Caco-2 (cell line): ENCODE measurements at regions of chr15 and their contacts with region 1.

Region 1: DNA sequence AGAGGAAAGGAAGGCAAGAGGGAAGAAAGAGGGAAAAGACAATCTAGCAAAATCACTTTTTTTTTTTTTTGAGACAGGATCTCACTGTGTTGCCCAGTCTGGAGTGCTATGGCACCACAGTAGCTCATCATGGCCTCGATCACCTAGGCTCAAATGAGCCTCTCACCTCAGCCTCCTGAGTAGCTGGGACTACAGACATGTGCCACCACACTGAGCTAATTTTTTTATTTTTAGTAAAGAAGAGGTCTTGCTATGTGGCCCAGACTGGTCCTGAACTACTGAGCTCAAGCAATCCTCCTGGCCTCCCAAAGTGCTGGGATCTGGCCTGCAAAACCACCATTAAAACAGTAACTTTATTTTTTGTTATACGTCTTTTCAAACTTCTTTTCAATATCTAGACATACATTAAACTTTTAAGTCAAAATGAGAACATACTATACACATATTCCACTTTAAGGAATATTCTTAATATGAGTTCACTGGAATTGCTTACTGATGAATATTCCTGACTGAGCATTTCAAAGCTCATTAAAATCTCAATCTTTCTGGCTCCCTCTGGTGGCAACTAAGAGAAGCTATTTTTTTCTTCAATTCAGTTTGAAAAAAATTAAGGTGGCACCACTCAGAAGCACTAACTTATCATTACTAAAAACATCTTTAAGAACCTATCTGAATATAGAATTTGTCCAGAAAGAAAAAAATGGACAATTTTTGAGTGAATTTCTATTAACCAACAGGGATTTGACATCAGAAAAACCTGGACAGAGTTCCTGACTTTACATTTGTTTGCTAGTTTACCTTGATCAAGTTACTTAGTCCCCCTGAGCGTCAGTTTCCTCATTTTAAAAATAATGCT is 40.9 kb downstream of the UACA start:
- DNase-seq: peak in 1 of 2 experiments; percentile 27
- H3K4me3 ChIP-seq: no peak overlapping the region
- H3K4me3 Mint-ChIP-seq: no peak overlapping the region
- H3K27ac Mint-ChIP-seq: no peak overlapping the region
- H3K4me1 ChIP-seq: peaks cover 38% of the 10 kb centered on the region
- H3K4me1 Mint-ChIP-seq: peaks cover 36% of the 10 kb centered on the region
- H3K27me3 ChIP-seq: no peaks in the 10 kb centered on the region
- H3K27me3 Mint-ChIP-seq: no peaks in the 10 kb centered on the region
- CTCF ChIP-seq: peak; percentile 59 to 62

Region 2: DNA sequence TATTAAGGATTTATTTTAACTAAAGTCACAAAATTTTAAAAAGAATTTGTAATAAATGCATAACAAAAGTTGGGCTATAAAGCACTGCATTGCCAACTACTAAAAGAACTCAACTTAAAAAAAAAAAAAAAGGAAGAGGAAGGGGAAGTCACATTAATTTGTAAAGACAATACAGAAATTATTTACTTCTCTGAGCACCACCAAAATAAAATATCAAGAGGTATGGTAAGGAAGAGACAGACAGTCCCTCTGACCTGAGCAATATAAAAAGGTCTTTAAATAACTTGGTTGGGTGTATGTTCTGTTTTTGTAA is 42.6 kb before region 1 on chr15:
- CTCF ChIA-PET with region 1: interaction called, 23 read pairs
- POLR2A ChIA-PET with region 1: interaction called, 3 read pairs
- intact Hi-C with region 1: loop called (anchors 1 kb)
- DNase-seq: no peak
- H3K4me3 ChIP-seq: no peak overlapping the region
- H3K4me3 Mint-ChIP-seq: no peak overlapping the region
- H3K27ac Mint-ChIP-seq: no peak overlapping the region
- H3K4me1 ChIP-seq: no peaks in the 10 kb centered on the region
- H3K4me1 Mint-ChIP-seq: peaks cover 24% of the 10 kb centered on the region
- H3K27me3 ChIP-seq: no peaks in the 10 kb centered on the region
- H3K27me3 Mint-ChIP-seq: no peaks in the 10 kb centered on the region
- CTCF ChIP-seq: peak in 1 of 2 experiments; percentile 6

Region 3: DNA sequence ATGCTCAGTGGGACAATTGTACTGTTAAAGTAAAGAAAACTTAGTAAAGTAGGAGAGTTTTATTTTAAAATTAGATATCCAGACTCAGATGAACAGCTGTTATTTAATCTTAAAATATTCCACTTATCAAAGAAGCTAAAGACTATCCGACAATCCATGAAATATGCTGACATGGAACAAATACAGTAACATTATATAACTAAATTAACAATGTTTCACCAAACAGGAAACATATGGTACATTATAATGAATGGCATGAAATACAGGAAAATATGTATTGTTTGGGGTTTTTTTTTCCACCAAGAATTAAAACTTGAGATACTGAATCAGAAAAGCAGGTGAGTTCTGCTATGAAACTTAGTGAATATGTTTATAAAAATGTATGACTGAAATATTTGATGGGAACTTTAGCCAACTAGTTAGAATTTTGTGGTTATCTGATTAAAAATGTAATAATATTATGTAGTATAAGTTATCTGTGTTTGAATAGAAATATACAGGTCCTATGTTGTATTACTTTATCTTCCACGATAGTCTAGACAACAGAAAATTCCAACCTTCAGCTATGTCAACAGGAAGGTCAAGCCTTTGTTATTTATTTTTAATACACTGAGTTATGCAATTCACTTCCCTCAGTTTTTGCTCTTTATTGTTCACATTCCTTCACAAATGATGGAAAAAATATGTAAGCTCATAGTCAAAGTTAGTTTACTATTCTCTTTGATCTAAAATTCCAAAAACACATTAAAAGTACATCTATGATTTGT is 31.8 kb before region 1 on chr15:
- CTCF ChIA-PET with region 1: interaction called, 8 read pairs
- POLR2A ChIA-PET with region 1: no interaction called
- intact Hi-C with region 1: loop called (anchors 1 kb)
- DNase-seq: no peak
- H3K4me3 ChIP-seq: no peak overlapping the region
- H3K4me3 Mint-ChIP-seq: no peak overlapping the region
- H3K27ac Mint-ChIP-seq: no peak overlapping the region
- H3K4me1 ChIP-seq: peaks cover 30% of the 10 kb centered on the region
- H3K4me1 Mint-ChIP-seq: peaks cover 12% of the 10 kb centered on the region
- H3K27me3 ChIP-seq: no peaks in the 10 kb centered on the region
- H3K27me3 Mint-ChIP-seq: no peaks in the 10 kb centered on the region
- CTCF ChIP-seq: no peak

Region 4: GRCh38 chr15:70701891-70702568 is 20.5 kb before region 1 on chr15:
- CTCF ChIA-PET with region 1: interaction called, 8 read pairs
- POLR2A ChIA-PET with region 1: interaction called, 3 read pairs
- intact Hi-C with region 1: loop called (anchors 1 kb)
- DNase-seq: no peak
- H3K4me3 ChIP-seq: no peak overlapping the region
- H3K4me3 Mint-ChIP-seq: peak overlapping the region; percentile 62
- H3K27ac Mint-ChIP-seq: peak overlapping the region; percentile 64
- H3K4me1 ChIP-seq: peaks cover 82% of the 10 kb centered on the region
- H3K4me1 Mint-ChIP-seq: peaks cover 66% of the 10 kb centered on the region
- H3K27me3 ChIP-seq: no peaks in the 10 kb centered on the region
- H3K27me3 Mint-ChIP-seq: no peaks in the 10 kb centered on the region
- CTCF ChIP-seq: no peak

Region 5: DNA sequence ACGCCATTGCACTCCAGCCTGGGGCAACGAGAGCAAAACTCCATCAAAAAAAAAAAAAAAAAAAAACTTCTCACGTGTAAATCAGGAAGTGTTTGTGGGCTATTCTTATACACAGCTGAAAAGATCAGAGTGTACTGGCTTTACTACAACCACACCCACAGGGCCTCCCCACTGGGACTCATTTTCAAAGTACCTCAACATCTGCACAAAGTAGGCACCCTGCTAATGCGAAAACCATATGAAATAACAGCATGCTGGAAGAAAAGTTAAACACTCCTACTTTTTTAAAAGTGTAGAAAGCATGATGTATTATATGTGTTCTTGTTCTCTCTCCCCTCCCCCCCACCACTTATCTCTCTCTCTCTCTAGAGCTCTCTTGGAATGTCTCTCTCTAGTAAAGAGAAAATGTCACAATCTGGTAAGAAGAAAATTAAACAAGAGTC is 29.7 kb after region 1 on chr15:
- CTCF ChIA-PET with region 1: interaction called, 3 read pairs
- POLR2A ChIA-PET with region 1: interaction called, 10 read pairs
- intact Hi-C with region 1: no loop called
- DNase-seq: no peak
- H3K4me3 ChIP-seq: no peak overlapping the region
- H3K4me3 Mint-ChIP-seq: no peak overlapping the region
- H3K27ac Mint-ChIP-seq: no peak overlapping the region
- H3K4me1 ChIP-seq: peaks cover 13% of the 10 kb centered on the region; the same call in 1 of the 2 replicates
- H3K4me1 Mint-ChIP-seq: peaks cover 18% of the 10 kb centered on the region
- H3K27me3 ChIP-seq: no peaks in the 10 kb centered on the region
- H3K27me3 Mint-ChIP-seq: no peaks in the 10 kb centered on the region
- CTCF ChIP-seq: no peak

Region 6: DNA sequence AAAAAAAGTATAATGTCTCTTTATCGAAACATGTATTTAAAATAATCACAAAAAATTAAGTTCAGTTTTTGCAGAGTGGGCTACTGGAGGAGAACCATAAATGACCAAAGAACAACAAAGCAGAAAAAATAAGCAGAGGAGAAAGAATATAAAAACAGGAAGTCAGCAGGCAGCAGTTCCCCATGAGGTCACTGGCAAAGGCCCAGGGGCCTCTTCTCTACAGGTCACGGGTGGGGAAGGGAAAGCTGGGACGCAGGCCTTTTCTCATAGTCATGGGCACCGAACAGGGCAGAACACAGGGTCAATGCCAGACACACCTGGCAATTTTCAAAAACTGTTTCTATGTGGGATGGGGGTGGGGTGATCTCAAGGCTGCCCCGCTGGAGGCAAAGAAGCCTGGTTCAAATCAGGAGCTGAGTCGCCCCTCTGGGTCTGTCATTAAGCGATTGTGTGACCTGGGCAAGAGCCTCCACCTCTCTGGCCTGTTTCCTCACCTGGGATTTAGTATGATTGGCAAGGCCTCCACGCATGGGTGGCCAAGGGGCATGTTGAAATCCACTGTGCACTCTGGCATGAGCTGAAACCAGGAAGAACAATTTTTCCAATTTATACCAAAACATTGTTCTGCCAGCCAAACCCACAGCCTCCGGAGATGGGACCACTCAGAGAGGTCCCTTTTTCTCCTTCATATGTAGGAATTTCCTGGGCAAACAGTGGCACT is 84.7 kb after region 1 on chr15:
- CTCF ChIA-PET with region 1: interaction called, 15 read pairs
- POLR2A ChIA-PET with region 1: no interaction called
- intact Hi-C with region 1: no loop called
- DNase-seq: no peak
- H3K4me3 ChIP-seq: no peak overlapping the region
- H3K4me3 Mint-ChIP-seq: no peak overlapping the region
- H3K27ac Mint-ChIP-seq: no peak overlapping the region
- H3K4me1 ChIP-seq: no peaks in the 10 kb centered on the region
- H3K4me1 Mint-ChIP-seq: peaks cover 5% of the 10 kb centered on the region
- H3K27me3 ChIP-seq: no peaks in the 10 kb centered on the region
- H3K27me3 Mint-ChIP-seq: no peaks in the 10 kb centered on the region
- CTCF ChIP-seq: no peak